Endothelial cell of umbilical vein (primary cell): ENCODE measurements at regions of chr4 and their contacts with region 1.

Region 1: DNA sequence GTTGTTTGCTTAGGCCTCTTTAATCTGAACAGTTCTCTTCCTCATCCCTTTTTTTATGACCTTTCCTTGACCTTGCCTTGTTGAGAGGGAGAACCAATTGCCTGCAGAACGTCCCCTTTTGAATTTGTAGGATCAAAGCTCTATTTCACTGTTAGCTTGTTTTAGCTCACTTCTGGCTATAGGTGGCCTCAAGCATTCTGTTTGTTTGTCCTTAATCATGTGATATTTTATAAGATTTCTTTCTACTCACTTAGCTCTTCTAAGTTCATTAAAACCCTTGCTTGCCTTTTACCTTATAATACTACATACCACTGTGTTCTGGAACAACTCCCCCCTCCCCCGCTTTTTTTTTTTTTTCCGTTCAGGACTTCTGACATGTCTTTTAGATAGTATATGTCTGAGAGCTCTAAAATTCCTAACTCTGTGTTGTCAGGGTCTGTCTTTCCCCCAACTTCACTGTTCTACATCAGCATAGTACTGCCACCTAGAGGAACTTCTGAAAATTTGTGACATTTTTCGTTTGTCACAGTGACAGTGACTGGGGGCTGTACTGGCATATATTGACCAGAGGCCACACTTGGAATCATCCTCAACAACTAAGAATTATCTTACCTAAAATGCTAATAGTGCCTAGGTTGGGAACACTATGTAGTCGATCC is 128.5 kb downstream of the LARP7 start:
- DNase-seq: peak; percentile 31
- H3K4me3 ChIP-seq: no peak overlapping the region
- H3K27ac ChIP-seq: no peak overlapping the region
- H3K4me1 ChIP-seq: no peaks in the 10 kb centered on the region
- H3K27me3 ChIP-seq: no peaks in the 10 kb centered on the region
- CTCF ChIP-seq: peak; percentile 40 to 41
- POLR2A ChIP-seq: no peak

Region 2: DNA sequence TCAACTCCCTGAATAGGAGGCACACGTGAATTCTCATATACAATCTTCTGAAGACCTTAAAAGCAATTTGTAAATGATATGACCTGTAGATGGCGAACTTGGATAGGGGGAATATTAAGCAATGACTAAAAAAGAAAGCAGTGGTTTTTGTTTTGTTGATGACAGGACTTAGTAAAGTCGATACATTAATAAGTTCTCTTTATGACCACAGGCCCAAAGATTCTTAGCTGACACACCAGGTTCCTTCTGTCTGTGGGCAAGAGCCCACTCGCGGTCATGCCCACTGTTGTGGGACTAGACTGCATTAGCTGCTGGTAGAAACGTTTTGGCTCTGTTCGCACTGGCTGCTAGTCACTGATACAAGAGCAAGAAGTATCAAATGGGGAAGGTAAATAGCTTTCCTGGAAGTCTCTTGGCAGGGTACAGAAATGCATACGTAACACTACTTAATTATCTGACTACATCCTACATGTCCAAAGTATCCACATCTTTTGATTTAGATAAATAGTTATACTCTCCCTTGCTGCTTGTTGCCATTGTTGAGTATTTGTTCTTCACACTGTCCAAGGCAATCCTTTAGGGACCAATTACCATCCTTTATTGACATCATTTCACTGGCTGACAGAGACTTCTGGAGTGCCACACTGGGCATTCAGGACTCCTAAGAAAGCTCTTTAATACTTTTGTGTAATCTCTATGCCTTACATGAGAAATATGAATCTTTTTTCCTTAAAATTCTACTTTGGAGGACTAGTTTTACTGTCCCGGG is 437.3 kb before region 1 on chr4:
- CTCF ChIA-PET with region 1: interaction called, 23 read pairs
- POLR2A ChIA-PET with region 1: no interaction called
- dilution Hi-C with region 1: no loop called
- intact Hi-C with region 1: loop called (anchors 1 kb)
- DNase-seq: peak; percentile 60
- H3K4me3 ChIP-seq: no peak overlapping the region
- H3K27ac ChIP-seq: no peak overlapping the region
- H3K4me1 ChIP-seq: no peaks in the 10 kb centered on the region
- H3K27me3 ChIP-seq: no peaks in the 10 kb centered on the region
- CTCF ChIP-seq: peak in 1 of 2 donors; percentile 34
- POLR2A ChIP-seq: no peak

Region 3: GRCh38 chr4:112636688-112637551 is 128.5 kb before region 1 on chr4 and contains the starts of genes LARP7 and ZGRF1:
- CTCF ChIA-PET with region 1: interaction called, 10 read pairs
- POLR2A ChIA-PET with region 1: no interaction called
- dilution Hi-C with region 1: no loop called
- intact Hi-C with region 1: loop called (anchors 1 kb)
- DNase-seq: peak; percentile 99
- H3K4me3 ChIP-seq: peak within 1 kb of the TSS; percentile 85 to 97 (median 96)
- H3K27ac ChIP-seq: peak within 1 kb of the TSS; percentile 91
- H3K4me1 ChIP-seq: peaks cover 16% of the 10 kb centered on the region
- H3K27me3 ChIP-seq: no peaks in the 10 kb centered on the region
- CTCF ChIP-seq: peak; percentile 84 to 88
- POLR2A ChIP-seq: no peak
- total RNA-seq, gene LARP7: 30.8 and 35.1 TPM in 2 replicates
- total RNA-seq, gene ZGRF1: 14.0 and 14.4 TPM in 2 replicates

Region 4: GRCh38 chr4:112775801-112776200 is 10.4 kb after region 1 on chr4:
- CTCF ChIA-PET with region 1: interaction called, 15 read pairs
- POLR2A ChIA-PET with region 1: no interaction called
- dilution Hi-C with region 1: no loop called
- intact Hi-C with region 1: no loop called
- DNase-seq: no peak
- H3K4me3 ChIP-seq: no peak overlapping the region
- H3K27ac ChIP-seq: no peak overlapping the region
- H3K4me1 ChIP-seq: no peaks in the 10 kb centered on the region
- H3K27me3 ChIP-seq: no peaks in the 10 kb centered on the region
- CTCF ChIP-seq: no peak
- POLR2A ChIP-seq: no peak

Region 5: GRCh38 chr4:113209153-113209552 is 443.7 kb after region 1 on chr4:
- CTCF ChIA-PET with region 1: no interaction called
- POLR2A ChIA-PET with region 1: no interaction called
- dilution Hi-C with region 1: no loop called
- intact Hi-C with region 1: no loop called
- DNase-seq: no peak
- H3K4me3 ChIP-seq: no peak overlapping the region
- H3K27ac ChIP-seq: no peak overlapping the region
- H3K4me1 ChIP-seq: no peaks in the 10 kb centered on the region
- H3K27me3 ChIP-seq: no peaks in the 10 kb centered on the region
- CTCF ChIP-seq: no peak
- POLR2A ChIP-seq: no peak